Activated naive CD4-positive, alpha-beta T cell treated with anti-CD3 and anti-CD28 coated beads for 36 hours (primary cell): ENCODE measurements at regions of chr14 and their contacts with region 1.

Region 1: DNA sequence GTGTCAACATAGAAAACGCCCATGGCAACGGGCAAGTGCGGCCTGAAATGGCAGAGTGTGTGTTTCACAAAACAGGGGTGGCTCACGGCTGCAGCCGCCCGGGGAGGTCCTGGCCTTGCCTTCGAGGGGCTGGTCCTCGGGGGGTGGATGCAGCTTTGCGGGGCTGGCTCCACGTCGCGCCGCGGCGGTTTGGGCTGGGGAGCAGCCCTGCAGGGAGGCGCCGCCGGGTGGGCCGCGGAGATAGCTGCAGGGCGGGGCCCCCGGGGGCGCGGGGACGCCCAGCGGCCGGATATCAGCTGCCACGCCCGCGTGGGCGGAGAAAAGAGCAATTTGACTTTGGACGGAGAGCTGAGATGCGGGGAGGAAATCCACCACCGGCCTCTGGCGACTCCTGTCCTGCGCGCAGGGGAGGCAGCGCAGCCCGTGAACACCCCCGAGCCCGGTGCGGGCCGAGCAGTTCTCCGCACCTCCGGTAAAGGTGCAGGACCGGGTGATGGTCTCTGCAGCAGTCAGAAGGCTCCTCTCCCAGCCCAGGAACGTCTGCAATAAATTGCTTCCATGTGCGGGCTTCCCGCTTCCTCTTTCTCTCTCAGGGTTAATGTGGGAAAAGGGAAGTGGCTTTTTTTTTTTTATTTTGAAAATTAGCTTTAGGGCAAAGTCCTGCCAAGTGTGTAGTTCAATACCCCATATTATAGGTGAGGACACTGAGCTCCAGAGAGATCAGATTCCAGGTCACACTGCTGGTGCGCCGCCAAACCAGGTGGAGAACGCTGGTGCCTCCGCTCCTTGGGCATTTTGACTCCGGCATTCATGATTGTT is 110.5 kb downstream of the ARF6 start:
- DNase-seq: peak; percentile 86
- H3K4me3 Mint-ChIP-seq: peak overlapping the region; percentile 92
- H3K27ac Mint-ChIP-seq: peak overlapping the region; percentile 98
- H3K4me1 Mint-ChIP-seq: peaks cover 42% of the 10 kb centered on the region
- H3K27me3 Mint-ChIP-seq: no peaks in the 10 kb centered on the region

Region 2: GRCh38 chr14:49754570-49755097 is 248.8 kb before region 1 on chr14:
- CTCF ChIA-PET with region 1: no interaction called
- intact Hi-C with region 1: no loop called
- DNase-seq: no peak
- H3K4me3 Mint-ChIP-seq: no peak overlapping the region
- H3K27ac Mint-ChIP-seq: no peak overlapping the region
- H3K4me1 Mint-ChIP-seq: no peaks in the 10 kb centered on the region
- H3K27me3 Mint-ChIP-seq: no peaks in the 10 kb centered on the region

Region 3: GRCh38 chr14:49862089-49862673 is 141.2 kb before region 1 on chr14:
- CTCF ChIA-PET with region 1: interaction called, 5 read pairs
- intact Hi-C with region 1: loop called (anchors 1 kb)
- DNase-seq: peak; percentile 91
- H3K4me3 Mint-ChIP-seq: no peak overlapping the region
- H3K27ac Mint-ChIP-seq: no peak overlapping the region
- H3K4me1 Mint-ChIP-seq: peaks cover 14% of the 10 kb centered on the region
- H3K27me3 Mint-ChIP-seq: peaks cover 2% of the 10 kb centered on the region

Region 4: GRCh38 chr14:49908432-49908781 is 95.0 kb before region 1 on chr14:
- CTCF ChIA-PET with region 1: interaction called, 4 read pairs
- intact Hi-C with region 1: loop called (anchors 1 kb)
- DNase-seq: no peak
- H3K4me3 Mint-ChIP-seq: no peak overlapping the region
- H3K27ac Mint-ChIP-seq: no peak overlapping the region
- H3K4me1 Mint-ChIP-seq: peaks cover 40% of the 10 kb centered on the region
- H3K27me3 Mint-ChIP-seq: no peaks in the 10 kb centered on the region

Region 5: DNA sequence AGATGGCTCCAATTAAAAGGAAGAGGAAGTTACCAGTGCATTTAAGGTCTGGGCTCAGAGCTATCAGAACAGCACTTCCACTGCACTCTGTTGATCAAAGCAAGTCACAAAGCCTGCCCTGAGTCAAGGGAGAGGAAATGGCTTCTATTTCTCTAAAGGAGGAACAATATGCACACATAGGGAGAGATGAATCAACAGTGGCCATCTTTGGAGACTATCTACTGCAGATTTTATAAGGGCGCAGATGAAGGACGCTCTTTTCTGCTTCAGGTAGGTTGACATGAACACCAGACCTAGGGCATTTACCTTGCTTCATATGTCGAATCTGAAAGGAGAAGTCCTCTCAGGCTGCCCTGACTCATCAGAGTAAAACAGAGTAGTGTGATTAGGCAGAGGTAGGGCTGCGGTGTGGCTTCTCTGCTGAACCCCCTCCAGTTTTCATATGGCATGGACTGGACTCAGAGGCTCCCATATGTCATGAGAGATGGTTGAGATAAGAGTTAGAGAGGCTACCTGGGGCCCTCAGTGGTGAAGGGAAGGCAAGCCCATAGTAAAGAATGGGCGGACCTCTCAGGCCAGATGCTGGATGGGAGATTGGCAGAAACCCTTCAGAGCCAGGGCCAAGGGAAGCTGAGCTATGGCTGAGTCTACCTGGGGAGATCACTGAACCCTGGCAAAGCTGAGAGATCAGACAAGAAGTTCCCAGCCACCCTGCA is 26.1 kb before region 1 on chr14:
- CTCF ChIA-PET with region 1: interaction called, 27 read pairs
- intact Hi-C with region 1: loop called (anchors 1 kb)
- DNase-seq: peak; percentile 66
- H3K4me3 Mint-ChIP-seq: peak overlapping the region; percentile 22
- H3K27ac Mint-ChIP-seq: peak overlapping the region; percentile 83
- H3K4me1 Mint-ChIP-seq: peaks cover 85% of the 10 kb centered on the region
- H3K27me3 Mint-ChIP-seq: no peaks in the 10 kb centered on the region

Region 6: DNA sequence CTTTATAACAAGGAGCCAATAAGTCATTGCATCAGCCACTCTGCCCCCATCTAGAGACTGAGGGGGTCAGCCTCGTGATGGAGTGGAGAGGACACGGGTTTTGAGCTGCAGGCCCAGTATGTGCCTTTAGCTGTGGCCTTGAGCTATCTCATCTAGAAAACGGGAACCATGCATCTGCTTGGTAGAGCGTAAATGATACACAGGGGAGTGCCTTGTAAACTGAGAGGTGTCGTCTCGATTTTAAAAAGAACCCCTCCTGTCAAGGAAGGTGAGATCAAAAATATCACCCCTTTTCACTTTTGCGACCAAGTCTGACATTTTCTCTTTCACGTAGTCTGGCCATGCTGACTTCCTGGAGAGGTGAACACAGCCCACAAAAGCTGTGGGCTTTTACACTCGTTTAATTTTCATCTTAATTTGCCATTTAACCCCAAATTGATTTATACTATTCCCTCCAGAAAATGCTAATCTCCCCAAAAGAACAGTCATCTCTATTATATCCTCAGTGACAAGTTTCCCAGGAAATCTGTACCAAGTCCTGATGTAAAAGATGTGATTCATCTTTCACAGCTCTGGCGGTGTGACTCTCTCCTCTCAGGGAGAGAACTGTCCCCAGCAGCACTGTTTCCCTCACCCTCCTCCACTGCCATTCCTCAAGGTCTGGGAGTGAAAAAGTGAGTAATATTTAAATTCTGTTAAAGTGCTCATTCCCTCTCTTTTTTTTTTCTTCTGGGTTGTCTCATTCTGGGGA is 82.3 kb after region 1 on chr14:
- CTCF ChIA-PET with region 1: interaction called, 3 read pairs
- intact Hi-C with region 1: loop called (anchors 1 kb)
- DNase-seq: peak; percentile 77
- H3K4me3 Mint-ChIP-seq: peak overlapping the region; percentile 6
- H3K27ac Mint-ChIP-seq: peak overlapping the region; percentile 83
- H3K4me1 Mint-ChIP-seq: peaks cover 93% of the 10 kb centered on the region
- H3K27me3 Mint-ChIP-seq: no peaks in the 10 kb centered on the region

Region 7: GRCh38 chr14:50173891-50174290 is 170.5 kb after region 1 on chr14:
- CTCF ChIA-PET with region 1: no interaction called
- intact Hi-C with region 1: no loop called
- DNase-seq: no peak
- H3K4me3 Mint-ChIP-seq: no peak overlapping the region
- H3K27ac Mint-ChIP-seq: peak overlapping the region; percentile 41
- H3K4me1 Mint-ChIP-seq: no peaks in the 10 kb centered on the region
- H3K27me3 Mint-ChIP-seq: no peaks in the 10 kb centered on the region

Region 8: DNA sequence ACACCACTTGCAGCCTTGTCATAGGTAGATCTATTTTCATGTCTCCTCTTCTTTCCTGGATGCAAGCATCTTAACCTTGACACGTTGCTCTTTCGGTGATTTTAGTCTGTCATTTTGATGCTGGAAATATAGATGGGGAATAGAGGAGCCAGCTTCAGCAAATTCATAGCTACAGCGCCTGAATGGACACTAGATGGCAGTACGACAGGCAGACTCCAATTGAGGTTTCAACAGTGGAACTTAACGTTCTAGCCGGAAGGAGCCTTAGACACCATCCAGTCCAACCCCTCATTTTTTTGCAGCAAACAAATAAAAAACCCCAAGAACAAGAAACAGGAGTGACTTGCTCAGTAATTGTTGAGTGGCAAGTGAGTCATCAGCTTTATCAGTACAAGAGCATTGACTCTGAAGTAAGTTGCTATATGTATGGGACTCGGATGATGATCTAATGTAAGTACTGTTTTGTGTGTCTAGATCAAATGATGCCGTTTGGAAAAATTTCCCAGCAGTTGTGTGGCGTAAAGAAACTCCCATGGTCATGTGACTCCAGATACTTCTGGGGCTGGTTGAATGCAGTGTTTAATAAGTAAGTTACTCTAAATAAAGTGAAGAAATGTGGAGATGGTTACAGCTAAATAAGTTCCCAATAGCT is 317.7 kb after region 1 on chr14:
- CTCF ChIA-PET with region 1: no interaction called
- intact Hi-C with region 1: loop called (anchors 1 kb)
- DNase-seq: peak; percentile 80
- H3K4me3 Mint-ChIP-seq: no peak overlapping the region
- H3K27ac Mint-ChIP-seq: no peak overlapping the region
- H3K4me1 Mint-ChIP-seq: peaks cover 25% of the 10 kb centered on the region
- H3K27me3 Mint-ChIP-seq: no peaks in the 10 kb centered on the region